Ovary (tissue), 10 donors: ENCODE measurements at regions of chr9 and their contacts with region 1.

Region 1: DNA sequence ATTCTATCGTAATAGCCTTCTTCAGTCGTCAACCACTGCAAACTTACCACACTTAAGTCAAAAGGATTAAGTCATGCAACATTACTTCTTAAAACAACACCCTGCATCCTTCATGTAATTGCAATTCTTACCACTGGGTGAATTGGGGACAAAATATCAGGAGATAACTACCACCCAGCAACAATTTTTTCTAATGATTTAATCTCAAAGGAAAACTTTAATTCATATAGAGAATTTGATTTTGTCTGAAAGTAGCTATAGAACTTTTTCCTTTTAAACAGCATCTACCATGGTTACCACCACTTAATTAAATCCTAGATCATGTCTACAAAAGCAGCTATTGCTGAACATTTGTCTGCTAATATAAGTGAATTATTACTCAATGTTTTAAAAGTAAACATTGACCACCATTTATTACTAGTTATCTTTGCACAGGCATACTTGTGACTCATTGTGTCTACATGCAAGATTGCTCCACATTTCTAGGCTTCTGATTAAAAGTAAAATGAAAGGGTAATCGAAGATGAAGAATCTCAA is 10.5 kb downstream of the MLLT3 start:
- DNase-seq: no peak
- H3K4me3 ChIP-seq: no peak overlapping the region
- H3K27ac ChIP-seq: no peak overlapping the region
- H3K4me1 ChIP-seq: no peaks in the 10 kb centered on the region
- H3K27me3 ChIP-seq: no peaks in the 10 kb centered on the region
- CTCF ChIP-seq: peak in 2 of 3 donors; percentile 16 to 46
- EP300 ChIP-seq: no peak
- POLR2A ChIP-seq: no peak

Region 2: DNA sequence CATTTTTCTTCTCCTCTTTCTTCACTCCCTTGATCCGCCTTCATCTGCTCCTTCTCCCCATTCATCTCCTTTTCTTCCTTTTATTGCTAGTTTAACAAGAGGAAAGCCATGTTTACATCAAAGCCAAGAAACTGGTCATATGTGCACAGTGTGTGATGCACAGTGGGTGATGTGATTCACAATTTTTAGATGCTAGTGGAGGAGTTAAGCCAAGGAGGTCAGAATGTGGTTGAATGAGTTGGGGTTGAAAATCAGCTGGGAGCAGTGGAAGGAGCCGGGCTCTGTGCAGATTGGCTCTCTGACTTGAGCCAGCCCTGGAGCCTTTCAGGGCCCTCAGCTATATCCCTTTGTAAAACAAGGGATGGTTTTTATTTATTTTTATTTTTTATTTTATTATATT is 1195.7 kb before region 1 on chr9:
- intact Hi-C with region 1: no loop called
- DNase-seq: no peak
- H3K4me3 ChIP-seq: no peak overlapping the region
- H3K27ac ChIP-seq: no peak overlapping the region
- H3K4me1 ChIP-seq: no peaks in the 10 kb centered on the region
- H3K27me3 ChIP-seq: no peaks in the 10 kb centered on the region
- CTCF ChIP-seq: no peak
- EP300 ChIP-seq: no peak
- POLR2A ChIP-seq: no peak

Region 3: DNA sequence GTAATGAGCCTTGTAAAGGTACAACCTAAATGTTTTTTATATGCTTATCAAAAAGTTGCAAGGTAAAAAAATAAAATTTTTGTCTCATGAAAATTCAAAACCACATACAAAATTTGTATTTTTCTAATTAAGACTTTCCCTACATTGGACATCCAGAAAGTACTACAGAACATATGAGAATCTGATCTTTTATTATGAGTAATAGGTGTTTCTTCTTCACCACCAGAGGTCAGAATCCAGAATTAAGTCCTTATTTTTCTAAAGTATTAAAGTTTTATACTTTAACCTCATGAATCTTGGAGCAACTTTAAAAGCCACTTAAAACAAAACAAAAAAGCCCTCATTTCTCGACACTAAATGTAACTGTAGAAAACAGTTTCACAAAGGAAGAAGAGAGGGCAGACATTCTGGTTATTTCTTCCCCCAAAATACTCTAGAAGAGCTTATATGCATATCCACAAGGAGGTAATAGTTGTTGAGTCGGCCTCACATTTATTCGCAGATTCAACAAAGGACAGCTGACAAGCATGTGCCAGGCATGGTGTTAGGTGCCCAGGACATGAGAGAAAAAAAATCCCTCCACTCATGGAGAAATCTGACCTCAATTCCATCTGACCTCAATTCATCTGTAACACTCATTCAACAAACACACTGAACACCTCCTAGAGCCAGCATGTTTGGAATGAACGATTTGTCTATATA is 58.8 kb before region 1 on chr9:
- intact Hi-C with region 1: loop called in 1 of 4 experiments (anchors 5 kb)
- DNase-seq: no peak
- H3K4me3 ChIP-seq: no peak overlapping the region
- H3K27ac ChIP-seq: no peak overlapping the region
- H3K4me1 ChIP-seq: peaks cover 3% of the 10 kb centered on the region
- H3K27me3 ChIP-seq: no peaks in the 10 kb centered on the region
- CTCF ChIP-seq: no peak
- EP300 ChIP-seq: no peak
- POLR2A ChIP-seq: no peak

Region 4: GRCh38 chr9:20563917-20564316 is 47.9 kb before region 1 on chr9:
- intact Hi-C with region 1: no loop called
- DNase-seq: no peak
- H3K4me3 ChIP-seq: no peak overlapping the region
- H3K27ac ChIP-seq: no peak overlapping the region
- H3K4me1 ChIP-seq: peaks cover 6% of the 10 kb centered on the region
- H3K27me3 ChIP-seq: no peaks in the 10 kb centered on the region
- CTCF ChIP-seq: no peak
- EP300 ChIP-seq: no peak
- POLR2A ChIP-seq: no peak

Region 5: DNA sequence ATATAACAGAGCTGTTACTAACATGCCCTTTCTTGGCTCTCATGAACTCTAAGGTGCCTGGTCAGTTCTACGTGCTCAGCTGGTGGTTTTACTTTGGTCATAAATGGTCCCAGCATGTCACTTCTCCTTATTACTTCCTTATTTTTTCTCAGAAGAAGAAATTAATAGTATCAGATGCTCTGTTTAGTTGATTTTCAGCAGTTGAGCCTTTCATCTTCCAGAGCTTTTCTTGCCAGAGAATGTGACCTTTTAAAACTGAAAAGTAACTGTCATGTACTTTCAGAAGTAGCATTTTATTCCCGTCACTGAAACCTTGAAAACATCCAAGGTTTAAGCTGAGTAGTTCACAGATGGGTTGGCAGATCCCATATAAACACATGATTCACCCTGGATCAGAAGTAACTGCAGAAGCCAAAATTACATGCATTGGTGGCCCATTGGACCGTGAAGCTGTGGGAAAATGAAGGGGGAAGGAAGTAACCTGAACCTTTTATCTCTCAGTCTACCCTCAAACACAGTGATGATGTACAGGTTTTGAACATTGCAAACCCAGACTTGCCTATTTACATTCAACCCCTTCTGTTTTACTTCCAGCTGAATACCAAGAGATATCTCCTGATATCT is 369.1 kb after region 1 on chr9:
- intact Hi-C with region 1: no loop called
- DNase-seq: peak in 1 of 5 donors; percentile 20
- H3K4me3 ChIP-seq: no peak overlapping the region
- H3K27ac ChIP-seq: peak overlapping the region in 1 of 2 donors; percentile 32
- H3K4me1 ChIP-seq: peaks cover 8% of the 10 kb centered on the region
- H3K27me3 ChIP-seq: no peaks in the 10 kb centered on the region
- CTCF ChIP-seq: no peak
- EP300 ChIP-seq: no peak
- POLR2A ChIP-seq: no peak